AG04450 (cell line): ENCODE measurements at regions of chr17 and their contacts with region 1.

Region 1: GRCh38 chr17:17269926-17270773 is 10.9 kb downstream of the COPS3 start:
- DNase-seq: no peak
- H3K4me3 ChIP-seq: no peak overlapping the region
- H3K27ac ChIP-seq: no peak overlapping the region
- H3K27me3 ChIP-seq: no peaks in the 10 kb centered on the region
- CTCF ChIP-seq: peak; percentile 29

Region 2: GRCh38 chr17:18111330-18111971 is 841.3 kb after region 1 on chr17:
- CTCF ChIA-PET with region 1: interaction called, 13 read pairs
- POLR2A ChIA-PET with region 1: no interaction called
- DNase-seq: no peak
- H3K4me3 ChIP-seq: no peak overlapping the region
- H3K27ac ChIP-seq: no peak overlapping the region
- H3K27me3 ChIP-seq: no peaks in the 10 kb centered on the region
- CTCF ChIP-seq: no peak